PC-3 (cell line): ENCODE measurements at regions of chr3 and their contacts with region 1.

Region 1: DNA sequence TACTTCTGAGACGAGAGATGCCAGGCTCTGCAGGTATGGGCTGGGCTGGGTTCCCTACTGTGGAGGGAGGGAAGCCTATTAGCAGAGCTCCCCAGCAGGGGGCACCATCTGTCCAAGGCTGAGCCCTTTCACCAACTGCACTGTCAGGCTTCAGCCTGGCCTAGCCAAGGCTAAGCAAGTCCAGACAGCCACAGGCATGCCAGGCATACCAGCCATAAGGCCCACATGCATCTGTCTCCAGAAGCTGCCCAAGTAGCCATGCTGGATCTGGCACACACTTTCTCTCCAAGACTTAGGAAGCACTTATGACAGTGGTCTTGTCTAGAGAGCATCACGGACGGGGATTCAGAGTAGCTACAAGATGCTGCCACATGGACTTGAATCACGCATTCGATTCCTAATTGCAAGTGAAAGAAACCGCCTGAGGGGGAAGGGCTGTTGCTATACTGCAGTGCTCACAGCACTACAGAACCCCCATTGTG is 28.3 kb downstream of the RUVBL1 start:
- DNase-seq: peak; percentile 70
- ATAC-seq: peak; percentile 97
- H3K4me3 ChIP-seq: no peak overlapping the region
- H3K27ac ChIP-seq: no peak overlapping the region
- H3K4me1 ChIP-seq: peaks cover 6% of the 10 kb centered on the region
- H3K27me3 ChIP-seq: no peaks in the 10 kb centered on the region
- CTCF ChIP-seq: peak; percentile 77

Region 2: DNA sequence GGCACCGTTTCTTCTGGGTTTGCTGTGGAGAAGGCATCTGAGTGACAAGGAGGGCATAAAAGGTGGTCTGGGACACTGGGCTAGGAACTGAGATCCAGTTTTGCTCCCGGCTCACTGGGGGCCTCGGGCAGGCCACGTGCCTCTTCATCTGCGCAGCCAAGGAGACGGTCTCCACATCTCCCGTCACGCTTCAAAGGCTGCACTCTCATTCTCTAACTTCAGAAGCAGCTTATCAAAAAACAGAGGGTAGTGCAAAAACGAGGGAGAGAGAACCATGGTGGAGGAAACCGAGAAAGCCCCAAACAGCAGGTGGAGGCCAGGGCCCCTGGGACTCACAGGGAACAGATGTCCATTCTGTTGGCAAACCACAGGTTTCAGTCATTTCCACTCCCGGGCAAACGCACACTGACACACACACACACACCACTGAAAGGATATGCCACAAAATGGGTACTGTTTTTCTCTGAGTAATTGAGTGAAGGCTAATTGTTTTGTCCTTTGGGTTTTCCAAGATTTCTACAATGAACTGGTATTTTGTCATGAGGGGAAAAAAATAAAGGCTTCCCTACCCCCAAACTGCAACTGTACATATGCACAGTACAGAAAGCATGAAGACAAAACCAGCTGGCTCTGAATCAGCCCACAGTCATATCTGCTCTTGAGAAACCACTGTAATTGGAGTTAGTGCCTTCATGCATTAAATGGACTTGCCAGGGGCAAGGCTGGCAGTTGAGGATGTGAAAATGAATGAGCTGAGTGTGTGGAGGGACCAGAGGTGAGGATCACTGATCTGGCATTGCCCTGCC is 344.8 kb before region 1 on chr3:
- CTCF ChIA-PET with region 1: no interaction called
- POLR2A ChIA-PET with region 1: no interaction called
- intact Hi-C with region 1: no loop called
- DNase-seq: peak; percentile 79
- ATAC-seq: no peak; the same call in 1 of the 2 replicates
- H3K4me3 ChIP-seq: no peak overlapping the region
- H3K27ac ChIP-seq: peak overlapping the region; percentile 95
- H3K4me1 ChIP-seq: peaks cover 58% of the 10 kb centered on the region
- H3K27me3 ChIP-seq: no peaks in the 10 kb centered on the region
- CTCF ChIP-seq: no peak

Region 3: DNA sequence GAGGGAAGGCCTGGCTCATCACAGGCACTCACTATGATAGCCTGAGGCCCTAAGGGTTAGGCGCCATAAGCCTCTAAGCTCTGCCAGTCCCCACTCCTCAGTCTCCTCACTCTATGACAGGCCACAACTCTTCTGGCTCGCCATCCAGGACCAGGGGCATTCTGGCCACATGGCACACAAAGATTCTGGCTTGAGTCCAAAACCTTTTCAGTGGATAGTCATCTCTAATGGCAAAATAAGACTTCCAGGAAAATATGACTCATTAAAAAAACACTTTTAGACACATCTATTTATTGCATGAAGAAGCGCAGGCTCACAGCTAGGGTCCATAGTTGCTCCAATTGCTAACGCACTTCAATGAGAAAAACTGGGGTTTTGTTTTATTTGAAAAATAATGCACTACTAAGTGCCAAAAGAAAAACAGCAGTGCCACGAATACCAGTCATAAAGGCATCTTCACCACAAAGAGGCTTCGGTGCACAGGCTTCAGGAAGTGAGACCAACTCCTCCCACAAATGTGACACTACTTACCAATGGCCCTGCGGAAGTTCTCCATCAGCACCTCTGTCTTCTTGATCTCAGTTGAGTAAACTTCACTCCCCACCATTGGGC is 17.2 kb after region 1 on chr3:
- CTCF ChIA-PET with region 1: no interaction called
- POLR2A ChIA-PET with region 1: no interaction called
- intact Hi-C with region 1: loop called (anchors 2 kb)
- DNase-seq: peak; percentile 92
- ATAC-seq: peak; percentile 91
- H3K4me3 ChIP-seq: no peak overlapping the region
- H3K27ac ChIP-seq: peak overlapping the region; percentile 24
- H3K4me1 ChIP-seq: peaks cover 14% of the 10 kb centered on the region
- H3K27me3 ChIP-seq: no peaks in the 10 kb centered on the region
- CTCF ChIP-seq: no peak